ENCODE measurements at regions of chr1 and their contacts with region 1.

Region 1: GRCh38 chr1:114745291-114745690 is 12.5 kb downstream of the CSDE1 start:
- DNase-seq: no peak
- ATAC-seq: peak; percentile 26 to 39
- H3K4me3 ChIP-seq: no peak overlapping the region
- H3K27ac ChIP-seq: peak overlapping the region; percentile 97 to 100 (median 98)
- H3K4me1 ChIP-seq: peaks cover 91 to 100% of the 10 kb centered on the region in 2 donors
- H3K27me3 ChIP-seq: no peaks in the 10 kb centered on the region
- CTCF ChIP-seq: no peak
- POLR2A ChIP-seq: no peak

Region 2: DNA sequence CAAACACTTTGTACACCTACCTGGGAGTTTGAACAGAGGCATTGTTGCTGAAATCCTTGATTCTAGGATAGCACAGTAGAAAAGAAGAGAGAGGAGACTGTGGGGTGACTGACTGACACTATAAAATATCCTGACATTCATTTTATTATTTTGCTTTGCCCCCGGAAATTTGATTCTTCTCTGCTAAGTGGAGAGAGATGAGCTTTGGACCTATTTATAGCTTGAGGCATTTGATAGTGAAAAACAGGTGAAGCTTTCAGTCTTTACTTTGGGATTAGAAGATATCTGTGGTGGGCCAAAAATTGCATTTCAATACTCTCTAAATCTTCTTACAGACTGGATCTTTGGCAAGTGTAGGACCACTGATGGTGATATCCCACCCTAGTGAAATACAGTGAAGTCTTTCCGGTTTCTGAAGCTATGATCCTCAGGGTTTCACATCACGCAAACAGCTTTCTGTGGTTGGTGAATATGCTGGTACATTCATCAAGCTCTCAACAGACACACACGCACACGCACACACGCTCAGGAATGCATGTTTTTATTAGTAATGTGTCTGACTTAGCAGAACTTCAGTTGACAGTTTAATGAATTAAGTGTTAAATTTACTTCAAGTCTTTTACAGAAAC is 49.7 kb before region 1 on chr1 and contains the start of gene AMPD1:
- in situ Hi-C with region 1: loop called in 1 of 4 experiments (anchors 10 kb)
- intact Hi-C with region 1: no loop called
- DNase-seq: no peak
- ATAC-seq: peak; percentile 53 to 74
- H3K4me3 ChIP-seq: peak within 1 kb of the TSS; percentile 24 to 60 (median 42)
- H3K27ac ChIP-seq: peak within 1 kb of the TSS; percentile 88 to 98 (median 91)
- H3K4me1 ChIP-seq: peaks cover 24 to 28% of the 10 kb centered on the region in 2 donors
- H3K27me3 ChIP-seq: no peaks in the 10 kb centered on the region
- CTCF ChIP-seq: no peak
- POLR2A ChIP-seq: peak in 1 of 2 donors; percentile 73
- total RNA-seq, gene AMPD1: 43.5 to 93.4 (median 68.1) TPM